ENCODE measurements at regions of chr5 and their contacts with region 1.

Region 1: DNA sequence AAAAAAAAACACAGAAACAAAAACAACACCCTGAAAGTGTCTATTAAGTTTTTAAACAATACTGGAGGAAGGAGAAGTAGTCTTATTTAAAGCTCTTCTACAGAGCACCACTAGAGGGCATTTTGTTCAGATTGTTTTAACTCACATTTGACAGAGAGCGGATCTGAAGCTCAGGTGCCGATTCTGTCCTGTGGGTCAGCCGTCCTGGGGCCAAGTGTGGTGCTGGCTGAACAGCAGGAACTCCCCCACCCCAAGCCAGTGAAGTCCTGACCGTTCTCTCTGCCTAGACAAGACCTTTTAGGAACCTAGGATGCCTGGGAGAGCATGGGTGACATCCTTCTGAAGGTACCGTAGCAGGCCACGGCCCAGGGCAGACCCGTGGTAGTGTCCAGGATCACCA is 3.9 kb downstream of the EXOC3 start:
- DNase-seq: no peak
- H3K4me3 Mint-ChIP-seq: no peak overlapping the region
- H3K27ac Mint-ChIP-seq: peak overlapping the region; percentile 79
- H3K4me1 Mint-ChIP-seq: peaks cover 43% of the 10 kb centered on the region
- H3K27me3 Mint-ChIP-seq: no peaks in the 10 kb centered on the region

Region 2: GRCh38 chr5:432928-433791 is 13.7 kb before region 1 on chr5:
- CTCF ChIA-PET with region 1: interaction called, 10 read pairs
- POLR2A ChIA-PET with region 1: no interaction called
- DNase-seq: no peak
- H3K4me3 Mint-ChIP-seq: no peak overlapping the region
- H3K27ac Mint-ChIP-seq: no peak overlapping the region
- H3K4me1 Mint-ChIP-seq: peaks cover 11% of the 10 kb centered on the region
- H3K27me3 Mint-ChIP-seq: no peaks in the 10 kb centered on the region

Region 3: GRCh38 chr5:472656-473553 is 26.0 kb after region 1 on chr5:
- CTCF ChIA-PET with region 1: interaction called, 10 read pairs
- POLR2A ChIA-PET with region 1: no interaction called
- DNase-seq: peak; percentile 82
- H3K4me3 Mint-ChIP-seq: peak overlapping the region; percentile 74
- H3K27ac Mint-ChIP-seq: peak overlapping the region; percentile 87
- H3K4me1 Mint-ChIP-seq: peaks cover 22% of the 10 kb centered on the region
- H3K27me3 Mint-ChIP-seq: peaks cover 7% of the 10 kb centered on the region

Region 4: DNA sequence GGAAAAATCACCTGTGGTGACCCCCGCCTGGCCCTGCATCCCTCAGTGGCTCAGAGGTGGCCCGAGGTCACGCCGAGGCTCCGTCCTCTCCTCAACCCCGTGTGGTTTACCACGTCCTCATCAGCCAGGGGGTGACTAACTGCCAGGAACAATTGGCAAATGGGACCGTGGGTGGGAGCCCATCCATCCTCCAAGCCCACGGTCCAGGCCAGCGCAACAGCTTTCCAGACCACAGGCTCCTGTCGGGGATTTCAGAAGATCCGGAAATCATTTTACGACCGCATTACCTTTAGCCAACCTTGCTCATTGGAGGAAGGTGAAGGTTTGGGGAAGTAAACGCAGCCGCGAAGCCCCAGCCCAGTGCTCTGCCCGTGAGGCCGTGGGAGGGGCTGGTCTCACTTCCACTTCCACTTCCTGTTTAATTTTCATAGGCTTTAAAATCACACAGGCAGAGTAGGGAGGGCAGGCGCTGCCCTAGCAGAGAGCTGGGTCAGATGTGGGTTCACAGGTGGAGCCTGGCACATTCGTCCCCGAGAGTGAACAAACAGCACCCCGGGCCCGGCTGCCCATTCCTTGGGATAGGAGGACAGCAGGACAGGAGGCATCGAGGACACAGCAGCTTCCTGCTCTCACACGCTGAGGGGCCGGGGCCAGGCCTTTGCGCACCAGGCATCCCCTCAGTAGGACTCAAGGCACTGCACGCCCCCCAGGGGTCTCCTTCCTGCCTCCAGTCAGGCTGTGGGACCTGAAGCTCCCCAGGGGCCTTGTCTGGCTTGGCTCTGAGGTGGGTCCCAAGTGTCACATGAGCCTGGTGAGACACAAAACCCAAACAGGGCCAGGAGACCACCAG is 97.2 kb after region 1 on chr5:
- CTCF ChIA-PET with region 1: no interaction called
- POLR2A ChIA-PET with region 1: no interaction called
- DNase-seq: peak; percentile 63
- H3K4me3 Mint-ChIP-seq: peak overlapping the region; percentile 41
- H3K27ac Mint-ChIP-seq: peak overlapping the region; percentile 83
- H3K4me1 Mint-ChIP-seq: peaks cover 13% of the 10 kb centered on the region
- H3K27me3 Mint-ChIP-seq: peaks cover 6% of the 10 kb centered on the region

Measured in activated CD4-positive, alpha-beta T cell treated with anti-CD3 and anti-CD28 coated beads, Interleukin-2, amount 10 ng/mL, durations not matched to agents 7 days and 5 days (primary cell).